HepG2 (cell line): ENCODE measurements at regions of chr20 and their contacts with region 1.

Region 1: DNA sequence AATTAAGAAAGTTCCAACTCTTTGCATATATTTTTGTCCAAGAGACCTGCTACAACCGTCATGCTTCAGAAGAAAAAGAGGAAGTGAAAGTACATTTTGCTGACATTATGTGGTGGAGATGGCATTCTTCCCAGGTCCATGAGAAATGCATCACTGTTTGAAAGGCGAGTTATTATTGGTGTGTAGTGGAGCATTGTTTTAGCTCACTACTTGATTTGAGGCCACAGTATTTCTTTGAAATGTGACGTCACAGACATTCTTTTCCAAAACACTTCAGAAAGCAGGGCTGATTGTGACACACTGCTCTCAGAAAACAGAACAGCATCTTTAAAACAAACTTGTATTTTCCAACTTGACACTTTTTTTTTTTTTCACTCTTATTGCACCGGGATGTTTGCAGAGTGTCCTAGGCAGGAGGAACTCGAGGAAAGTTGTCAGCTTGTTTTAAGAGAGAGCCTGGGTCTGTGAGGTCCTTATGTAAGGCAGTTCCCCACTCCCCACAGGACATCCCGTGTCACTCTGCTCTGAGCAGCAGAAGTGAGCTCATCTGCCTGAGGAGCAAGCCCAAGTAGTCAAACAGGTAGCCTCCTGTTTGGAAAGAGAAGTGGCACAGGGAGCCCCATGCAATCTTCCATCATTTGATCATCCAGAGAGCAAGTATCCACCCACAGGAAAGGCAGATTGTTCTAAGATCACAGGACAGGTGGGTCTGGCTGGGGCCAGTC is 1.1 kb downstream of the SPTLC3 start:
- DNase-seq: peak; percentile 63
- ATAC-seq: peak; percentile 66
- H3K4me3 ChIP-seq: peak overlapping the region; percentile 50 to 76 (median 67)
- H3K27ac ChIP-seq: peak overlapping the region; percentile 49
- H3K4me1 ChIP-seq: peaks cover 73% of the 10 kb centered on the region
- H3K27me3 ChIP-seq: no peaks in the 10 kb centered on the region; a peak in 1 of 5 replicates
- CTCF ChIP-seq: no peak
- EP300 ChIP-seq: no peak
- POLR2A ChIP-seq: no peak
- RAD21 ChIP-seq: no peak

Region 2: DNA sequence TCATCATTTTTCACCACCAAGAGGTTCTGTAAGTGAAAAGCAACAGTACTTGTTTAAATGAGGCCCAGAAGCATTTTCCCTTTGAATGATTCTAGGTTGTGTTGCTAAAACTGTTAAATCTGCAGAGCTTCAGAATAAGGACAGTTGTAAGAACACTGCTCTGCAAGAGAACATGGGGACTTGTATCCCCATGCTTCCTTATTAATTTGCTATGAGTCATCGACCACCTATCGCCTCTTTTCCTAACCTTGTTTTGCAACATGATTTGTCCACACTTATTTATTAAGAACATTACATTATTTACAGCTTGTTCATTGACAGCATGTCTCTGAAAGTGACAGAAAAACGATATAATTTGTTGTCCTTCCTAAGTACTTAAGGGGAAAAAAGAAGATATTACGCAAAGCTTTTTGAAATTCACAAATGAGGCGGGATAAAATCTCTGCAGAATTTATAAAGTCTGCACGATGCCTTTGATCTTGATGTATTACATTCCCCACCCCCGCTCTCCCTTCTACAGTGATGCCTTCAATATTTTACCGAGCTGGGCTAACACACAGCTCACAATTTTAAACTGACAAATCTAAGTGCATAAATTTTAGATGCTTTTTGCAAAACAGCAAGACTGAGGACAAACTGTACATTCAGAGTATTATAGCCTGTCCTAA is 221.1 kb before region 1 on chr20:
- CTCF ChIA-PET with region 1: no interaction called
- POLR2A ChIA-PET with region 1: no interaction called
- in situ Hi-C with region 1: no loop called
- intact Hi-C with region 1: no loop called
- DNase-seq: no peak
- ATAC-seq: no peak
- H3K4me3 ChIP-seq: no peak overlapping the region
- H3K27ac ChIP-seq: no peak overlapping the region
- H3K4me1 ChIP-seq: no peaks in the 10 kb centered on the region
- H3K27me3 ChIP-seq: no peaks in the 10 kb centered on the region
- CTCF ChIP-seq: no peak
- EP300 ChIP-seq: no peak
- POLR2A ChIP-seq: no peak
- RAD21 ChIP-seq: no peak

Region 3: DNA sequence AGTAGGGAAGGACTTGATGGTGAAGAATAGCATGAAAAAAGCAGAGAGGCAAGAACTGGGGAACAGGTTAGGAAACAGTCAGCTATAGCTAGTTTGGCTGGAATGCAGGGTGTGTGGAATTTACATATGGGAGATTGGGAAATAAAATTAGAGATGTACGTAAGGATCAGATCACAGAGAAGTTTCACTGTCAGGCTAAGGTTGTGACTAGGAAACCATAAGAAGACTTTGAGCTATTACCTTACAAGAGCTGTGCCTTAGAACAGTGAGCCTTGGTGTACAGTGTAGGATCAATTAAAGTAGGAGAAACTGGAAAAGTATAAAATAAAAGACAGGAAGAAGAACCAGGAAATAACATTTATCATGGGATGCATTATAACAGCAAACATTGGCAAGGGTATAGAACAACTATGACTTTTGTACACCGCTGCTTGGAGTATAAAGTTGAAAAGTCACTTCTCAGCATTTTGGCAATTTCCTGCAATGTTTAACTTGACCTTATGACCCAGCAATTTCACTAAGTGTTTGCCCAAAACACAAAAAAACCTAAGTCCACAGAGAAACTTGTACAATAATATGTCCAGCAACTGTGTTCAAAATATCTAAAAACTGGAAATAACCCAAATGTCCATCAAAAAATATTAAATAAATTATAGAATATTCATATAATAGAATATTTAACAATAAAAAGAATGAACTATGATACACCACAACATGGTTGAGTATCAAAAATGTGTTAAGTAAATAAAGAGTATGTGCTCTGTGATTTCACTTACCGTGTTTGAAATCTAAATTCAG is 32.3 kb before region 1 on chr20:
- CTCF ChIA-PET with region 1: no interaction called
- POLR2A ChIA-PET with region 1: interaction called, 31 read pairs
- in situ Hi-C with region 1: no loop called
- intact Hi-C with region 1: loop called (anchors 1 kb)
- DNase-seq: peak; percentile 92
- ATAC-seq: peak; percentile 80
- H3K4me3 ChIP-seq: peak overlapping the region; percentile 1 to 43 (median 40); a peak in 5 of 6 replicates
- H3K27ac ChIP-seq: peak overlapping the region; percentile 80
- H3K4me1 ChIP-seq: peaks cover 61% of the 10 kb centered on the region
- H3K27me3 ChIP-seq: no peaks in the 10 kb centered on the region
- CTCF ChIP-seq: no peak
- EP300 ChIP-seq: peak in 1 of 2 experiments; percentile 97; a peak in 2 of 4 replicates
- POLR2A ChIP-seq: 0 out of 4 replicates have a peak, but pooled peaks of 1 of the 2 experiments have one; percentile 22
- RAD21 ChIP-seq: no peak

Region 4: GRCh38 chr20:13022401-13023155 is 12.7 kb after region 1 on chr20:
- CTCF ChIA-PET with region 1: no interaction called
- POLR2A ChIA-PET with region 1: interaction called, 21 read pairs
- in situ Hi-C with region 1: no loop called
- intact Hi-C with region 1: no loop called
- DNase-seq: no peak
- ATAC-seq: peak; percentile 31
- H3K4me3 ChIP-seq: no peak overlapping the region
- H3K27ac ChIP-seq: no peak overlapping the region
- H3K4me1 ChIP-seq: peaks cover 30% of the 10 kb centered on the region
- H3K27me3 ChIP-seq: no peaks in the 10 kb centered on the region
- CTCF ChIP-seq: no peak
- EP300 ChIP-seq: no peak
- POLR2A ChIP-seq: no peak
- RAD21 ChIP-seq: no peak

Region 5: GRCh38 chr20:13089950-13090469 is 80.2 kb after region 1 on chr20:
- CTCF ChIA-PET with region 1: no interaction called
- POLR2A ChIA-PET with region 1: interaction called, 8 read pairs
- in situ Hi-C with region 1: no loop called
- intact Hi-C with region 1: loop called (anchors 1 kb)
- DNase-seq: peak; percentile 99
- ATAC-seq: peak; percentile 99
- H3K4me3 ChIP-seq: peak overlapping the region in 1 of 3 experiments; percentile 1; a peak in 1 of 6 replicates
- H3K27ac ChIP-seq: peak overlapping the region; percentile 75
- H3K4me1 ChIP-seq: peaks cover 67% of the 10 kb centered on the region
- H3K27me3 ChIP-seq: no peaks in the 10 kb centered on the region
- CTCF ChIP-seq: no peak
- EP300 ChIP-seq: peak; percentile 87 to 99; a peak in 3 of 4 replicates
- POLR2A ChIP-seq: no peak
- RAD21 ChIP-seq: peak; percentile 22; the same call in 1 of the 2 replicates

Region 6: GRCh38 chr20:13784893-13785715 is 775.3 kb after region 1 on chr20 and contains the starts of genes ESF1 and NDUFAF5:
- CTCF ChIA-PET with region 1: no interaction called
- POLR2A ChIA-PET with region 1: no interaction called
- in situ Hi-C with region 1: no loop called
- intact Hi-C with region 1: loop called (anchors 5 kb)
- DNase-seq: peak; percentile 99
- ATAC-seq: peak; percentile 95
- H3K4me3 ChIP-seq: peak within 1 kb of the TSS; percentile 84 to 90 (median 86)
- H3K27ac ChIP-seq: peak within 1 kb of the TSS; percentile 93
- H3K4me1 ChIP-seq: peaks cover 66% of the 10 kb centered on the region
- H3K27me3 ChIP-seq: no peaks in the 10 kb centered on the region; a peak in 1 of 5 replicates
- CTCF ChIP-seq: peak; percentile 42
- EP300 ChIP-seq: peak; percentile 69 to 76; a peak in 2 of 4 replicates
- POLR2A ChIP-seq: peak; percentile 40 to 87; a peak in 3 of 4 replicates
- RAD21 ChIP-seq: peak; percentile 24
- total RNA-seq, gene ESF1: 66.9 and 95.1 TPM in 2 replicates
- total RNA-seq, gene NDUFAF5: 66.7 and 86.0 TPM in 2 replicates